ENCODE measurements at regions of chr11 and their contacts with region 1.

Region 1: GRCh38 chr11:27313157-27313821 is 49.7 kb downstream of the CCDC34 start:
- DNase-seq: no peak
- H3K4me3 ChIP-seq: no peak overlapping the region
- H3K27ac ChIP-seq: no peak overlapping the region
- H3K4me1 ChIP-seq: peaks cover 3% of the 10 kb centered on the region
- H3K27me3 ChIP-seq: no peaks in the 10 kb centered on the region
- CTCF ChIP-seq: no peak
- EP300 ChIP-seq: no peak
- POLR2A ChIP-seq: no peak

Region 2: DNA sequence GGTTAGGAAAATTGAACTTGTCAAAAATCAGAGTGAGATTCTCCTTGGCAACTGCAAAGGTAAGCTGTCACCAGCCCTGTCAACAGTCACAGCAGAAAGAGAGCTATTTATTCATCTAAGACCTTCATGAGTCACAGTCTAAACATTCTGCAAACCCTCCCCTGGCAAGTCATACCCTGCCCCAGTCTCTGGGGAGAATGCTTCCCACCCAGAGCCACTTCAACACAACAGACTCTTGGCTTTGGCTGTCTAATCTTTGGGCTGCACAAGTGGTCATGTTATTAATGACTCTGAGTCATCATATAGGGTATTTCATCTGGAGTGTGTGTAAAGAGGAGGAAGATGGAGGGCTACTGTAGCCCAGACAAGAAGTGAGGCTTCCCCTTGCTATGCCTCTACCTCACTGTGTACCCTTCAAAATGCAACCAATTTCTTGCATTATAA is 103.7 kb before region 1 on chr11:
- intact Hi-C with region 1: no loop called
- DNase-seq: no peak
- H3K4me3 ChIP-seq: no peak overlapping the region
- H3K27ac ChIP-seq: no peak overlapping the region
- H3K4me1 ChIP-seq: peaks cover 15% of the 10 kb centered on the region
- H3K27me3 ChIP-seq: no peaks in the 10 kb centered on the region
- CTCF ChIP-seq: no peak
- EP300 ChIP-seq: no peak
- POLR2A ChIP-seq: no peak

Region 3: DNA sequence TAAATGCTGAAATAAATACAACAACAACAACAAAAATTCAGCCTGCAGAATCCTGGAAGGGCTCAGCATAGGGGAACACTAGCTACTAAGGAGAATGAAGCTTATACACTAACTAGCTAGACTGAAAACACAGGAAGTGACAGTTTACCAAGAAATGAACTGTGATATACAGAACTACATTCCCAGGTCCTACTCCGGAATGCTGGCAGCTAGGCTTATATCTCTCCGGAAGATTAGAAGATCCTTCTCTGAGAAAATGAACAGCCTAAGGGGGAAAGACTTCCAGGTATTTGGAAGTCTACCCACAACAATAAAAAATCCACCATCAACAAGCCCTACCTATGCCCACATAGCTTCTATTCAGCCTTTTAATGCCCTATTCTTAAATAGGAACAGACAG is 18.7 kb after region 1 on chr11:
- intact Hi-C with region 1: loop called in 1 of 4 experiments (anchors 2 kb)
- DNase-seq: no peak
- H3K4me3 ChIP-seq: no peak overlapping the region
- H3K27ac ChIP-seq: no peak overlapping the region
- H3K4me1 ChIP-seq: peaks cover 3% of the 10 kb centered on the region
- H3K27me3 ChIP-seq: no peaks in the 10 kb centered on the region
- CTCF ChIP-seq: no peak
- EP300 ChIP-seq: no peak
- POLR2A ChIP-seq: no peak

Measured in ovary (tissue), 10 donors.